Activated CD8-positive, alpha-beta T cell treated with anti-CD3 and anti-CD28 coated beads for 36 hours (primary cell): ENCODE measurements at regions of chr7 and their contacts with region 1.

Region 1: GRCh38 chr7:12067141-12067831 is 143.8 kb upstream of the TMEM106B start:
- DNase-seq: peak; percentile 72
- ATAC-seq: peak; percentile 65
- H3K4me3 Mint-ChIP-seq: no peak overlapping the region
- H3K27ac Mint-ChIP-seq: no peak overlapping the region
- H3K4me1 Mint-ChIP-seq: peaks cover 3% of the 10 kb centered on the region
- H3K27me3 Mint-ChIP-seq: no peaks in the 10 kb centered on the region
- CTCF ChIP-seq: peak; percentile 52

Region 2: DNA sequence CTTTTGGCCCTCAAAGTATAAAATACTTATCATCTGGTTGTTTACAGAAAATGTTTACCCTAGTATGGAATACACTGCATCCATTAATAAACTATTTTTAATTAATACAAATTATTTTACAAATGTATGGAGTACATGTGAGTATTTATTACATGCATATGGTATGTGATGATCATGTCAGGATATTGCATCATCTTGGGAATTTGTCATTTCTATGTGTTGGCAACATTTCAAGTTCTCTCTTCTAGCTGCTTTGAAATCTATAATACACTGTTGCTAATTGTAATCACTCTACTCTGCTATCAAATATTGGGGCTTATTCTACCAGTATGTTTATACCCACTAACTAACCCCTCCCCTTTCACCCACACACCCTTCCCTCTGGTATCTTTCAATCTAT is 131.4 kb before region 1 on chr7:
- CTCF ChIA-PET with region 1: no interaction called
- POLR2A ChIA-PET with region 1: no interaction called
- intact Hi-C with region 1: no loop called
- DNase-seq: no peak
- ATAC-seq: no peak
- H3K4me3 Mint-ChIP-seq: no peak overlapping the region
- H3K27ac Mint-ChIP-seq: no peak overlapping the region
- H3K4me1 Mint-ChIP-seq: no peaks in the 10 kb centered on the region
- H3K27me3 Mint-ChIP-seq: no peaks in the 10 kb centered on the region
- CTCF ChIP-seq: no peak

Region 3: DNA sequence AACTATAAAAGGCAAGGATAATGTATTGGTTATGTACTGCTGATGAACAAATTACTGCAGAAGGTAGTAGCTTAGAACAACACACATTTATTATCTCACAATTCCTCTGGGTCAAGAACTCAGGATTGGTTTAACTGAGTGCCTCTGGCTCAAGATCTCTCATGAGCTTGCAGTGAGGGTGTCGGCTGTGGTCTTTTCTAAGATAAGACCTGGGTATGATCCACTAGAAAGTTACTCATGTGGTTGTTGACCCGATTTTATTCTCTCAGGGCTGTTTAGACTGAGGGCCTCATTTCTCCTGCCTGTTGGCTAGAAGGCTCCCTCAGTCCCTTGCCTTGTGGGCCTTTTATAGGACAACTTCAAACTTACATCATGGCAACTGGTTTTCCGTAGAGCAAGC is 249.6 kb after region 1 on chr7:
- CTCF ChIA-PET with region 1: interaction called, 23 read pairs
- POLR2A ChIA-PET with region 1: no interaction called
- intact Hi-C with region 1: loop called (anchors 1 kb)
- DNase-seq: no peak
- ATAC-seq: no peak
- H3K4me3 Mint-ChIP-seq: no peak overlapping the region
- H3K27ac Mint-ChIP-seq: no peak overlapping the region
- H3K4me1 Mint-ChIP-seq: peaks cover 7% of the 10 kb centered on the region
- H3K27me3 Mint-ChIP-seq: peaks cover 2% of the 10 kb centered on the region
- CTCF ChIP-seq: no peak